Endothelial cell of umbilical vein (primary cell): ENCODE measurements at regions of chr10 and their contacts with region 1.

Region 1: GRCh38 chr10:101840741-101841453 is 2.7 kb downstream of the KCNIP2 start:
- DNase-seq: peak; percentile 85
- H3K4me3 ChIP-seq: peak overlapping the region; percentile 17 to 45 (median 26)
- H3K27ac ChIP-seq: no peak overlapping the region
- H3K4me1 ChIP-seq: peaks cover 13% of the 10 kb centered on the region
- H3K27me3 ChIP-seq: no peaks in the 10 kb centered on the region
- CTCF ChIP-seq: peak; percentile 98 to 99
- POLR2A ChIP-seq: no peak

Region 2: DNA sequence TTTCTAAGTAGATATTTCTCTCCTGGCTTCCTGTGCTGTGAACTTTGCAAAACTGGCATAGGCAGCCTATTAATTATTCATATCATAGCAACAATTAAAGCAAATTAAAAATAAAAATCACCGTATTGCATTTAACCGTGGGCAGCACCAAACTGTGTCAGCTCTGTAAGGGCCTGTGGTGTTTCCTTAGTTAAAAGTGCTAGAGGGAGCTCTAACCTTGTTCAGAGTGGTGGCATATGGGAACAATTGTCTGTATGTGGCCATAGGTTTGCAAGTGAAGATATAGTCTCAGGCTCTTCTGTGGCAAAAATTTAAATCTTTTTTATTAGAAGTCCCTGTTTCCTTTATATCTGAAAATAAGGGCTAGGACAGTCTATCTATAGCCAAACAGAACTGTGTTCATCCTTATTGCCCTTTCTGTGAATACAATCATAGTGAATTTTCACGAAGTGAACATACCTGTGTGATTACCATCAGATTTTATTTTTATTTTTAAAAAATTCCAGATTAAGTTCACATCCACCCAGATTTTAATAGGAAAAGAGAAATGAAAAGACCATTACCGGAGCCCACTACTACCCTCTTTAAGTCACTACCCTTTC is 345.5 kb before region 1 on chr10:
- CTCF ChIA-PET with region 1: no interaction called
- POLR2A ChIA-PET with region 1: no interaction called
- dilution Hi-C with region 1: no loop called
- intact Hi-C with region 1: no loop called
- DNase-seq: peak; percentile 34
- H3K4me3 ChIP-seq: no peak overlapping the region
- H3K27ac ChIP-seq: no peak overlapping the region
- H3K4me1 ChIP-seq: no peaks in the 10 kb centered on the region
- H3K27me3 ChIP-seq: no peaks in the 10 kb centered on the region
- CTCF ChIP-seq: peak in 1 of 2 donors; percentile 33
- POLR2A ChIP-seq: no peak

Region 3: GRCh38 chr10:101818119-101818871 is 22.6 kb before region 1 on chr10 and contains the start of gene OGA:
- CTCF ChIA-PET with region 1: interaction called, 39 read pairs
- POLR2A ChIA-PET with region 1: interaction called, 6 read pairs
- dilution Hi-C with region 1: no loop called
- intact Hi-C with region 1: no loop called
- DNase-seq: peak; percentile 100
- H3K4me3 ChIP-seq: peak within 1 kb of the TSS; percentile 82 to 99 (median 90)
- H3K27ac ChIP-seq: peak within 1 kb of the TSS; percentile 83
- H3K4me1 ChIP-seq: peaks cover 19% of the 10 kb centered on the region
- H3K27me3 ChIP-seq: no peaks in the 10 kb centered on the region
- CTCF ChIP-seq: no peak
- POLR2A ChIP-seq: peak; percentile 87
- total RNA-seq, gene OGA: 113 and 118 TPM in 2 replicates

Region 4: GRCh38 chr10:101889256-101890210 is 48.6 kb after region 1 on chr10:
- CTCF ChIA-PET with region 1: interaction called, 248 read pairs
- POLR2A ChIA-PET with region 1: no interaction called
- dilution Hi-C with region 1: no loop called
- intact Hi-C with region 1: loop called (anchors 1 kb)
- DNase-seq: peak; percentile 81
- H3K4me3 ChIP-seq: no peak overlapping the region
- H3K27ac ChIP-seq: no peak overlapping the region
- H3K4me1 ChIP-seq: no peaks in the 10 kb centered on the region
- H3K27me3 ChIP-seq: no peaks in the 10 kb centered on the region
- CTCF ChIP-seq: peak; percentile 81 to 84
- POLR2A ChIP-seq: no peak

Region 5: GRCh38 chr10:101961591-101962498 is 120.9 kb after region 1 on chr10:
- CTCF ChIA-PET with region 1: interaction called, 10 read pairs
- POLR2A ChIA-PET with region 1: no interaction called
- dilution Hi-C with region 1: no loop called
- intact Hi-C with region 1: no loop called
- DNase-seq: no peak
- H3K4me3 ChIP-seq: no peak overlapping the region
- H3K27ac ChIP-seq: no peak overlapping the region
- H3K4me1 ChIP-seq: peaks cover 7% of the 10 kb centered on the region
- H3K27me3 ChIP-seq: no peaks in the 10 kb centered on the region
- CTCF ChIP-seq: no peak
- POLR2A ChIP-seq: no peak

Region 6: DNA sequence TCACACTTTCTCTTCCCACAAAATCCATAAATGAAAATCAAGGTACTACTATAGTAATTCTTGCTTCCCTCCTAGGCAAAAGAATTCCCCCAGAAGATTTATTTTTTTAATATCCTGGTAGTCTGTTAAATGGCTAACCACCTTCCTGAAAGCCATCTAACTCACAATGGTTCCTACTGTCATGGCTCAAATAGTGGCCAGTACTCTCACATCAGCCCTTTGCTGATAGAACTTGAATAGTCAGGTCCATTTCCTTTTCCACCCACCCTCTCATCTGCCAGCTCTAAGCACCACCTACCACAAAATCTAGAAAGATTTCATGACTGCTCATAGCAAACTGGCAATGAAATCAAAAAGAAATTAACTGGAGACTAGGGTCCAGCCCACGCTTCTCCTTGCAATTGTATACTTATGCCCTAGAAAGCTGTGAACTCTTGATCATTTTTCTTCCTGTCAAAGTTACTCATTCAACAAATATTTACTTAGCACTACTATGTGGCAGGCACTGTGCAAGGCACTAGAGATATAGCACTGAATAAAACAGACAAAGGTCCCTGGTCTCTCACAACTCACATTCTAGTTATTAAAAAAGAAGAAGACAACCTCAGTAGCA is 154.7 kb after region 1 on chr10:
- CTCF ChIA-PET with region 1: interaction called, 52 read pairs
- POLR2A ChIA-PET with region 1: no interaction called
- dilution Hi-C with region 1: no loop called
- intact Hi-C with region 1: no loop called
- DNase-seq: peak; percentile 52
- H3K4me3 ChIP-seq: no peak overlapping the region
- H3K27ac ChIP-seq: no peak overlapping the region
- H3K4me1 ChIP-seq: peaks cover 11% of the 10 kb centered on the region
- H3K27me3 ChIP-seq: no peaks in the 10 kb centered on the region
- CTCF ChIP-seq: no peak
- POLR2A ChIP-seq: no peak

Region 7: DNA sequence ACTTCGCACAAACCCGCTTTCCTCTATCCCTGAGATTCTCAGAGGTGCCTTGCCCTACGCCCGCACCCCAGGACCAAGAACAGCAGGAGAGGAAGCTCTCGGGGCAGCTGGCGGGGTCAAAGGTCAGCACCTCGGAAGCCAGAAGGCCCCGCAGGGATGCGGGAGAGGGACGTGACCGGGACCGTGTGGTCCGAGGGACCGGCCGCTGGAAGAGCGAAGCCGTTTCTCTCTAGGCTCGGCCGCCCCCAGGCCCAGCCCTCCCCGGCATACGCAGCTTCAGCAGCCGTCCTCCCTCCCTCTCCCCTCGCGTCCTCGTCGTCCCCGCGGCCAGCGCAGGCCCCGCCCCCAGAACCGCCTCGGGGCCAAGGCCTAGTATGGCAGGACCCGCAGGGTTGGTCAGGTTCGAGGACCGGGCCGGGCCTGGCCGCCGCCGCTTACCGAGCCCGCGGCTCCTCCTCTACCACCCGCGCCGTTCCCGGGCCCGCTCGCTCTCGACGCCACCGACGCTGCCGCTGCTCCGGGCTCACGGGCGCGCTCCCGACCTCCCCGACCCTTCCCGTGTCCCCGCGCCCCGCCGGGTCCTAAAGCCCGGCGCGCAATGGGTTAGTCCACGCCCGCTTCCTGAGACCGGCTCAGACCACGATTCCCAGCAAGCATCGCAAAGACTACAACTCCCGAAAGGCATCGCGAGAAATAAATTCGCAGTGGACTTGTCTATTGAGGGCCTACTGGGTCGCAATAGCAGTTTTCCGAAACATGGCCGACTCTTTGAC is 214.9 kb after region 1 on chr10 and contains the start of gene ARMH3:
- CTCF ChIA-PET with region 1: interaction called, 13 read pairs
- POLR2A ChIA-PET with region 1: no interaction called
- dilution Hi-C with region 1: no loop called
- intact Hi-C with region 1: no loop called
- DNase-seq: peak; percentile 97
- H3K4me3 ChIP-seq: peak within 1 kb of the TSS; percentile 30 to 90 (median 71)
- H3K27ac ChIP-seq: peak within 1 kb of the TSS; percentile 29
- H3K4me1 ChIP-seq: peaks cover 8% of the 10 kb centered on the region
- H3K27me3 ChIP-seq: no peaks in the 10 kb centered on the region
- CTCF ChIP-seq: no peak
- POLR2A ChIP-seq: peak; percentile 56
- total RNA-seq, gene ARMH3: 16.6 and 17.6 TPM in 2 replicates

Region 8: DNA sequence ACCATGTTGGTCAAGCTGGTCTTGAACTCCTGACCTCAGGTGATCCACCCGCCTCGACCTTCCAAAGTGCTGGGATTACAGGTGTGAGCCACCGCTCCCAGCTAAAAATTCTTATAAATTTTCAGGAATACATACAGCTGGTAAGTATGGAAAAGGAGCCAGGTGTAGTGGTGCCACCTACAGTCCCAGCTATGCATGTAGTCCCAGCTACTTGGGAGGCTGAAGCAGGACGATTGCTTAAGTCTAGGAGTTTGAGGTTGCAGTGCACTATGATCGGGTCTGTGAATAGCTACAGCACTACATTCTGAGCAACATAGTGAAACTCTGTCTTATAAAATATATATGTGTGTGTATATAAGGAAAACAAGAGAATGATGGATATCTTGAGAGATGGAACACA is 260.3 kb after region 1 on chr10:
- CTCF ChIA-PET with region 1: interaction called, 12 read pairs
- POLR2A ChIA-PET with region 1: no interaction called
- dilution Hi-C with region 1: no loop called
- intact Hi-C with region 1: no loop called
- DNase-seq: no peak
- H3K4me3 ChIP-seq: no peak overlapping the region
- H3K27ac ChIP-seq: no peak overlapping the region
- H3K4me1 ChIP-seq: peaks cover 9% of the 10 kb centered on the region
- H3K27me3 ChIP-seq: no peaks in the 10 kb centered on the region
- CTCF ChIP-seq: no peak
- POLR2A ChIP-seq: no peak